ENCODE measurements at regions of chr6 and their contacts with region 1.

Region 1: GRCh38 chr6:29649701-29650673 is 6.9 kb upstream of the MOG start:
- DNase-seq: peak; percentile 99
- H3K4me3 Mint-ChIP-seq: peak overlapping the region; percentile 86
- H3K27ac Mint-ChIP-seq: peak overlapping the region; percentile 98
- H3K4me1 Mint-ChIP-seq: peaks cover 18% of the 10 kb centered on the region
- H3K27me3 Mint-ChIP-seq: peaks cover 16% of the 10 kb centered on the region

Region 2: GRCh38 chr6:29494131-29494530 is 155.9 kb before region 1 on chr6:
- CTCF ChIA-PET with region 1: no interaction called
- DNase-seq: no peak
- H3K4me3 Mint-ChIP-seq: no peak overlapping the region
- H3K27ac Mint-ChIP-seq: no peak overlapping the region
- H3K4me1 Mint-ChIP-seq: no peaks in the 10 kb centered on the region
- H3K27me3 Mint-ChIP-seq: peaks cover 20% of the 10 kb centered on the region

Region 3: DNA sequence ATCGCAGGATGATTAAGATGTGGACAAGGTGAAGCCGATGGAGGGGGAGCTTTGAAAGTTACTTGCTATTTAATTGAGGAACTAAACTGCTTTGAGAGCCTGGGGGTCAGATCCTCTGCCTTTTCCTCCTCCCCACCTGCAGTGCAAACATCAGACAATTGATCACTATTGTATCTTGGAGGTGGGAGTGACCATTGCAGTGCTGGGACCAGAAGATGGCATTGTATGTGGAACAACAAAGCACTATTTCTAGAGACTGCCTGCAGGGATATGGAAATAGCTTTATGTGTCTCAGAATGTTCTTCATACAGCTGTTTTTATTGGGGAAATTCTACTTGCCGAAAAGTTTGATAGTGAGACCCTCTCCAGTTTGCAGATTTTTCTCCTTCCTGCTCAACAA is 11.1 kb after region 1 on chr6:
- CTCF ChIA-PET with region 1: interaction called, 63 read pairs
- DNase-seq: no peak
- H3K4me3 Mint-ChIP-seq: no peak overlapping the region
- H3K27ac Mint-ChIP-seq: no peak overlapping the region
- H3K4me1 Mint-ChIP-seq: no peaks in the 10 kb centered on the region
- H3K27me3 Mint-ChIP-seq: peaks cover 57% of the 10 kb centered on the region

Region 4: GRCh38 chr6:29676981-29677601 is 27.1 kb after region 1 on chr6:
- CTCF ChIA-PET with region 1: interaction called, 30 read pairs
- DNase-seq: no peak
- H3K4me3 Mint-ChIP-seq: no peak overlapping the region
- H3K27ac Mint-ChIP-seq: no peak overlapping the region
- H3K4me1 Mint-ChIP-seq: peaks cover 11% of the 10 kb centered on the region
- H3K27me3 Mint-ChIP-seq: peaks cover 42% of the 10 kb centered on the region

Region 5: GRCh38 chr6:29705389-29706231 is 55.6 kb after region 1 on chr6:
- CTCF ChIA-PET with region 1: interaction called, 21 read pairs
- DNase-seq: peak; percentile 42
- H3K4me3 Mint-ChIP-seq: no peak overlapping the region
- H3K27ac Mint-ChIP-seq: no peak overlapping the region
- H3K4me1 Mint-ChIP-seq: peaks cover 53% of the 10 kb centered on the region
- H3K27me3 Mint-ChIP-seq: peaks cover 38% of the 10 kb centered on the region

Region 6: GRCh38 chr6:29776684-29777083 is 126.7 kb after region 1 on chr6:
- CTCF ChIA-PET with region 1: no interaction called
- DNase-seq: no peak
- H3K4me3 Mint-ChIP-seq: no peak overlapping the region
- H3K27ac Mint-ChIP-seq: no peak overlapping the region
- H3K4me1 Mint-ChIP-seq: no peaks in the 10 kb centered on the region
- H3K27me3 Mint-ChIP-seq: peaks cover 45% of the 10 kb centered on the region